CD14-positive monocyte (primary cell): ENCODE measurements at regions of chr14 and their contacts with region 1.

Region 1: GRCh38 chr14:102666635-102667034 is 74.2 kb downstream of the RCOR1 start:
- DNase-seq: no peak
- H3K4me3 ChIP-seq: no peak overlapping the region
- H3K4me3 Mint-ChIP-seq: no peak overlapping the region
- H3K27ac ChIP-seq: no peak overlapping the region
- H3K27ac Mint-ChIP-seq: peak overlapping the region in 3 of 7 donors; percentile 50 to 69 (median 58)
- H3K4me1 ChIP-seq: no peaks in the 10 kb centered on the region
- H3K4me1 Mint-ChIP-seq: peaks cover 29% of the 10 kb centered on the region
- H3K27me3 ChIP-seq: no peaks in the 10 kb centered on the region
- H3K27me3 Mint-ChIP-seq: peaks cover 0 to 1% (median 0%) of the 10 kb centered on the region in 3 donors
- CTCF ChIP-seq: no peak

Region 2: DNA sequence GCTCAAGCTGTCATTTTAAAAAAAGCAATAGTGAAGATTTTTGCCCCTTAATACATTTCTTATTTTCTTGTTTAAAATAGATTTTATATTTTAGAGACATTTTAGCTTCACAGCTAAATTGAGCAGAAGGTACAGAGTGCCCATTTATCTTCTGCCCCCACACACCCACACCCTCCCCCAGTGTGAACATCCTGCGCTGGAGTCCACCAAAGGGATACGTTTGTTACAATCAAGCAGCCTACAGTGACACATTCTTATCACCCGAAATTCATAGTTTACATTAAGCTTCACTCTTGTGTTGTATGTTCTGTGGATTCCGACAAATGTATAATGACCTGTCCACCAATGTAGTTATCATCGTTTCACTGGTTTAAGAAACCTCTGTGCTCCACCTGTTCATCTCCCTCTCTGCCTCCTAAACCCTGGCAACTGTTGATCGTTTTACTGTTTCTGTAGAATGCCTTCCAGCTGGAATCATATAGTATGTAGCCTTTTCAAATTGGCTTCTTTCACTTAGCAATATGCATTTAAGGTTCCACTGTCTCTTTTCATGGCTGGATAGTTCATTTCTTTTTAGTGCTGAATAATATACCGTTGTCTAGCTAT is 19.7 kb after region 1 on chr14:
- intact Hi-C with region 1: loop called in 1 of 2 experiments (anchors 2 kb)
- DNase-seq: no peak
- H3K4me3 ChIP-seq: no peak overlapping the region
- H3K4me3 Mint-ChIP-seq: no peak overlapping the region
- H3K27ac ChIP-seq: no peak overlapping the region
- H3K27ac Mint-ChIP-seq: peak overlapping the region in 1 of 7 donors; percentile 27
- H3K4me1 ChIP-seq: peaks cover 15 to 18% of the 10 kb centered on the region in 2 donors
- H3K4me1 Mint-ChIP-seq: peaks cover 39% of the 10 kb centered on the region
- H3K27me3 ChIP-seq: no peaks in the 10 kb centered on the region
- H3K27me3 Mint-ChIP-seq: no peaks in the 10 kb centered on the region
- CTCF ChIP-seq: no peak

Region 3: GRCh38 chr14:102878174-102878969 is 211.7 kb after region 1 on chr14:
- intact Hi-C with region 1: no loop called
- DNase-seq: no peak
- H3K4me3 ChIP-seq: no peak overlapping the region
- H3K4me3 Mint-ChIP-seq: no peak overlapping the region
- H3K27ac ChIP-seq: no peak overlapping the region
- H3K27ac Mint-ChIP-seq: peak overlapping the region in 1 of 7 donors; percentile 43
- H3K4me1 ChIP-seq: no peaks in the 10 kb centered on the region
- H3K4me1 Mint-ChIP-seq: no peaks in the 10 kb centered on the region
- H3K27me3 ChIP-seq: no peaks in the 10 kb centered on the region
- H3K27me3 Mint-ChIP-seq: no peaks in the 10 kb centered on the region
- CTCF ChIP-seq: no peak

Region 4: GRCh38 chr14:102900631-102901571 is 234.3 kb after region 1 on chr14:
- intact Hi-C with region 1: no loop called
- DNase-seq: no peak
- H3K4me3 ChIP-seq: no peak overlapping the region
- H3K4me3 Mint-ChIP-seq: no peak overlapping the region
- H3K27ac ChIP-seq: no peak overlapping the region
- H3K27ac Mint-ChIP-seq: peak overlapping the region in 1 of 7 donors; percentile 73
- H3K4me1 ChIP-seq: peaks cover 0 to 6% of the 10 kb centered on the region in 2 donors
- H3K4me1 Mint-ChIP-seq: peaks cover 9% of the 10 kb centered on the region
- H3K27me3 ChIP-seq: no peaks in the 10 kb centered on the region
- H3K27me3 Mint-ChIP-seq: peaks cover 0 to 1% (median 0%) of the 10 kb centered on the region in 3 donors
- CTCF ChIP-seq: no peak